Posterior cingulate gyrus (tissue), 11 donors: ENCODE measurements at regions of chr6 and their contacts with region 1.

Region 1: DNA sequence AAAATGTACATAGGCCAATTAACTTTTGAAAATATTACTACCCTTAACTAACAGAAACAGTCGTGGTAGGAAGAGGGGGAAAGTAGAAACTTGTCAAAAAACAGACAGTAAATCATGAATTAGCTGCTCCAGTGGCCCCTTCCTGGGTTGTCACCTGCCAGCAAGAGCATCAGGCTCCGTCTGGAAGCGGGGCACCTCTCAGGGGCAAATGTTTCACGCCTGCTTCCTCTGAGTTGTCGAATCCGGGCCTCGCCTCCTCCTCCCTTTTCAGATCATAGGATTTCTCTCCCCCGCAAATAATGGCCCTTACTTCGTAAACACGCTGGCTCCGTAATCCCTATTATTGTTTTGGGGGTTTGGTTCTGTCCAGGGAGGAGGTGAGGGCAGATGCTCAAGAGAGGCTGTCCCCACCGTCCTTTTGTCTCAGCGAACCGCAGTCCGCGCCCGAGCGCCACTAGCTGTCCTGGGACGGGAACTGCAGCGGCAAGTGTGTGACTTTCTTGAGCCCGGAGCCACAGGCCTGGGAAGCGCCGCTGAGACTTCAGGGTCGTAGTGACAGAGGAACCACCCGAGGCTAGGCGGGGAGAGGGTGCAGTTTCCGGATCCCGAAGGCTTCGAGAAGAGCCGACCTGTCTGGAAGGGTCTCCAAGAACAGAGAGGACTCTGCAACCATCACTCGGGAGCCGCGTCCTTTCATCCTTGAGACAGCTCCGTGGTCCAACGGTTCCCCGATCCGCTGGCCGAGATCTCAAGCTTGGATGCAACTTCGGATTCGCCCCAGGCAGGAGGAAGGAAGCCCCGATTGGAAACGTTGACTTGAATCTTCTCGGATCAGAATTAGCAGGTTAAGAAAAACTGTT is 214.5 kb upstream of the ZNF184 start:
- DNase-seq: peak; percentile 67 to 97 (median 82)

Region 2: DNA sequence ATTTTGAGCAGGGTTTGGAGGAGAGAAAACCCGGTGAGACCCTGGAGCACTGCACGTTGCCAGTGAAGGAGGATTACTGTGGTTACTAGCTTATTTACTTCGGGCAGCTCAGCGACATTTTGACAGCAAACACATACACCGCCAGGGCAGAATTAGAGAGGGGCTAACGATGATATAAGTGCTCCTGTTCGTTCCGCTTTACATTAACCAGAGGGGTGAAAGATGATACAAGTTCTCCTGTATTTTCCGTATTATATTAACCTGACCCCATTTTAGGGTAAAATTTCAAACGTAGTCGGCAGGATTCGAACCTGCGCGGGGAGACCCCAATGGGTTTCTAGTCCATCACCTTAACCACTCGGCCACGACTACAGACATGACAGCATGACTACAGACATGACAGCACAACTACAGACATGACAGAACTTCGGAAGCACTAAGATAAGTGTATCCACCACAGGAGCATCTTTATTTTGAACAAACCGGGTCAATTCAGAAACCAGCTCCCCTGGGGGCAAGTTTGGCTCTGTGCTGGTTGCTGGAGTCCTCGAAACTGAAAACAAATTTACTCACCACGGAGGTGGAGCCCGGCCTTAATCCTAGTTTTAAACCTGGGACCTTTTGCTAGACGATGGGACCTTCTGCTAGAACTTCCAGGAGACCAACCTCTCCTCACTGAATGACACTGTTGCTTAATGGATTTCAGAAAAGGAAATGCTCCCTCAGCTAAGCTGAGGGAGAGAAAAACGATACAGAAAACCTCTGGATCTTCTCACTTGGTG is 134.1 kb before region 1 on chr6:
- intact Hi-C with region 1: no loop called
- DNase-seq: no peak

Region 3: GRCh38 chr6:27726620-27727023 is 39.2 kb after region 1 on chr6:
- intact Hi-C with region 1: no loop called
- DNase-seq: no peak

Region 4: DNA sequence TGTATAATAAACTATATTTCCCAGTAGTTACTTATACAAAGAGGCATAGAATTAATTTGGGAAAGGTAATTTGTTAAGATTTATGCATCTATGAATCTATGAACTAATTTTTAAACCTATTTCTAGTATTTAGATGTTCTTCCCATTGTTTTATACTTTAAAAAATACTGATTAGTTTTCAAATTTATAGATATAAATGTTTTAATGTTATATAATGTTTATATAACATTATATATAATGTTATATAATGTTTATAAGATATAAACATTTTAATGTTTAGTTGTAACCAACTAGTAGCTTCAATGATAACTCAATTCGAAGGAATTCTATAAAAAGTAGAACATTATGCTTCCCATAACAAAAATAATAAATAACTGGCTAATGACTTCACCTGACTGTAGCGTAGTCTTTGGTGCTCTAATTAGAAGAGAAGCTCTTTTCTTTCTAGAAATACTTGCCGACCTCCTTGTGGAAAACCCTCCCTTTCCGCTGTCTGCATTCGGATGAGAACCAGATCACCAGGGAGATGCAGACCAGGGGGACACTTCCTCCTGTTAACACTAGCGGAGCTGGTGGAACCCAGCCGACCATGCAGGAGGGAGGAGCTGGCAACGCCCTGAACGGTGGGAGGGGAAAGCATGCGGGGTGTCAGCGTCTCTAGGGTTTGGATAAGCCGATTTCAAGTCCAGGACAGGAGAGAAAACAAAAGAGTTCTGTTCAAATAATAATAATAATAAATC is 66.5 kb after region 1 on chr6:
- intact Hi-C with region 1: loop called (anchors 2 kb)
- DNase-seq: peak; percentile 39 to 95 (median 56)